ENCODE measurements at regions of chr16 and their contacts with region 1.

Region 1: GRCh38 chr16:86354645-86355044 is 155.7 kb upstream of the FOXF1 start:
- DNase-seq: no peak
- ATAC-seq: peak in 1 of 8 donors; percentile 25
- H3K4me3 ChIP-seq: no peak overlapping the region
- H3K27ac ChIP-seq: no peak overlapping the region
- H3K4me1 ChIP-seq: no peaks in the 10 kb centered on the region
- H3K27me3 ChIP-seq: peaks cover 0 to 98% (median 79%) of the 10 kb centered on the region in 7 donors
- CTCF ChIP-seq: no peak

Region 2: DNA sequence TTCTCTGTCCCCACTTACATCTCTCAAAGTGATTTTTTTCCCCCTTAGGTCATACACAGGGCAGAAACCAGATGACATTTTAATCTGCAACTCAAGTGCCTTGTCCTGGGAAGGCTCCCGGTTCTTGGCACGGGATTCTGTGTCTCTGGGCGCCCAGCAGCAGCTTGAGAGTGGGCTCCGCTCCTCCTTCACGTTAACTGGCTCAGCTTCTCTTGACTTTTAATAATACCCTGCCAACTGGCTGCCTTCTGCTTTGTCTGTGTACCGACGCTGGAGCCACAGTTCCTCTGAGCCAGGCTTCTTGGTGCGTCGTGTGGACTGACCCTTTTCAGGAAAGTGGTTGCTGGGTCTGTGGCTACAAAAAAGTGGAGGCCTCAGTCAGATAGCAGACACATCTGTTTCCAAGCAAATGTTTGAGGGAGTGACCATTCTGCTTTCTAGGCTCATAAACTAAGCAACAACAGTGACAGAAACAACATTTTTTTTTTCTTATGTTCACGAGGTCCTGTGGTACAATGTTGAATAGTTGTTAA is 390.8 kb before region 1 on chr16:
- intact Hi-C with region 1: loop called in 1 of 10 experiments (anchors 5 kb)
- DNase-seq: peak; percentile 63 to 72
- ATAC-seq: peak; percentile 86 to 93 (median 89)
- H3K4me3 ChIP-seq: no peak overlapping the region
- H3K27ac ChIP-seq: peak overlapping the region in 4 of 10 donors; percentile 8 to 44 (median 30)
- H3K4me1 ChIP-seq: peaks cover 0 to 21% (median 7%) of the 10 kb centered on the region in 9 donors
- H3K27me3 ChIP-seq: peaks cover 0 to 16% (median 4%) of the 10 kb centered on the region in 7 donors
- CTCF ChIP-seq: no peak

Region 3: DNA sequence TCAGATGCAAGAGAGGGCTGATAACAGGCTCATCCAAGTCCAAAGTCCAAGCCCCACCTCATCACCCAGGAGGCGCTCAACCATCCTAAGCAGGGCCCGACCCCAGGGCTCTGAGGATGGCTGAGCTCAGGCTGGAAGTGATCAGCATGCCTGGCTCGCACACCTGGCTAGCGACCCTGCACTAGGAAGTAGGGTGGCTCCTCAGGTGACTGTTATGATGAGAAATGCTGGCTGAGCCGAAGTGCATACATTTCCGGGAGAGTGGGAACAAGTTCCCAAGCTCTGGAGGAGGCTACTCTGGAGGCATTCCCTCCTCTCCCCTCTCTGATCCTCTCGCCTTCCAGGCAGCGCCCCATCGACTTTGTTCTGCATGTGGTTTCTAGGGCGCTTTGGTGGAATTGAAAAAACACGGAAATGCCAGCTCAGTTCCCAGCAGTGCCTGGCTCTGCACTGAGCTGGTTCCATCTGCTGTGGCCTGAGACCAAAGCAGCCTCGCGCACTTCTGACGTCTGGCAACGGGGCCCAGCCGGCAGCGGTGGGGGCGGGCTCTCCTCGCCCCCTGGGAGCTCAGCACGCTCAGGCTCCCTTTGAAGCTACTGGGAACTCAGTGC is 325.4 kb before region 1 on chr16:
- intact Hi-C with region 1: no loop called
- DNase-seq: peak; percentile 60 to 63
- ATAC-seq: peak; percentile 63 to 82 (median 74)
- H3K4me3 ChIP-seq: no peak overlapping the region
- H3K27ac ChIP-seq: peak overlapping the region in 5 of 10 donors; percentile 16 to 67 (median 45)
- H3K4me1 ChIP-seq: peaks cover 0 to 20% (median 7%) of the 10 kb centered on the region in 9 donors
- H3K27me3 ChIP-seq: peaks cover 0 to 71% (median 44%) of the 10 kb centered on the region in 7 donors
- CTCF ChIP-seq: no peak

Region 4: DNA sequence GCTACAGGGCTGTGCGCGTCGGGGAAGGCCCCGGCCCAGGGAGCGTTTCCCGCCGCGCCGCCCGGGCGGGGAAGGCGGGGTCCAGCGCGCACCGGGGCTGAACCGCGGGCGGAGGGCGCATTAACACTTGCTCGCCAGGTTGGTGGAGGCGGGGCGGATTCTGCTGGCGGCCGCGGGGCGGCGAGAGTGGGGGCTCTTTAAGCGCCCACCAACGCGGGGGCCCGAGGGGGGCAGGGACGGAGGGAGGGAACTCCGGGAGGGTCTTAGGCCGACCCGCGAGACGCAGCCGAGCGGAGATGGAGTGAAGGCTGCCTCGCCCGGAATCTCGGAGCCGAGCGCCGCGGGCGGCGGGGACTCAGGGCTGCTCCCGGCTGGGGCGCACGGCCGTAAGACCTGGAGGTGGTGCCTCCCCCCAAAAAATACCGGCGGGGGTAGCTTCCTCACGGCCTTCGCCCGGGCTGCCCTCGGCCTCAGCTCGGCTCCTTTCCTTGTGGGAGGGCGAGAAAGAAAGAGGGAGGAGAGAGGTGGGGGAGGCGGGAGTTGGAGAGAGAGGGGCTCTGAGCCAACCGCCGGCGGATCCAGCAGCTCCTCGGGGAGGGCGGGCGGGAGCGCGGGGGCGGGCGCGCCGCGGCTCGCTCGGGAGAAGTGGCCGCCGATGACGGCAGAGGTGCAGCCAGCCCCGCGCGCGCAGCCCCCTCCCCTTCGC is 155.3 kb after region 1 on chr16:
- intact Hi-C with region 1: loop called in 1 of 10 experiments (anchors 5 kb)
- DNase-seq: peak; percentile 36 to 54
- ATAC-seq: peak in 7 of 8 donors; percentile 36 to 66 (median 59)
- H3K4me3 ChIP-seq: peak overlapping the region; percentile 43 to 67 (median 58)
- H3K27ac ChIP-seq: peak overlapping the region in 9 of 10 donors; percentile 4 to 74 (median 60)
- H3K4me1 ChIP-seq: peaks cover 10 to 54% (median 36%) of the 10 kb centered on the region in 9 donors
- H3K27me3 ChIP-seq: peaks cover 71 to 100% (median 98%) of the 10 kb centered on the region in 7 donors
- CTCF ChIP-seq: no peak